ENCODE measurements at regions of chr7 and their contacts with region 1.

Region 1: DNA sequence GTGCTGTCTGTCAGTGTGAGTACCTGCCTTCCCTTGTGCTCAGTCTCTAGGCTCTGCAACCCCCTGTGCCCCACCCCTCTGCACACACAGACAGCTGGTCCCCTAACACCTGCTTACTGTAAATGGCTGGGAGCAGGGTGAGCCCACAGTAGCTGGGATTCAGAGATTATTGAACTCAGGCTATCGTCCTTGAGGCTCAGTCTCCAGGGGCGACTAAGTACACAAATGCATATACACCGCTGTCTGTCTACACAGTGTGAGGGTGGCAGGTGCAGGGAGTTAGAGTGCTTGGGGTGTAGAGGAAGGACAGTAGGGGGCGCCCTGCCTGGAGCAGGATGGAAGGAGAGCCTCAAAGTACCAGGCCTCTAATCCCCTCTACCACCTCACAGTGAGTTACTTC is 12.9 kb downstream of the UPP1 start:
- DNase-seq: peak; percentile 65
- ATAC-seq: peak; percentile 25
- H3K4me3 Mint-ChIP-seq: no peak overlapping the region
- H3K27ac Mint-ChIP-seq: no peak overlapping the region
- H3K4me1 Mint-ChIP-seq: peaks cover 29% of the 10 kb centered on the region
- H3K27me3 Mint-ChIP-seq: no peaks in the 10 kb centered on the region

Region 2: GRCh38 chr7:47968847-47969774 is 132.9 kb before region 1 on chr7:
- CTCF ChIA-PET with region 1: interaction called, 10 read pairs
- POLR2A ChIA-PET with region 1: no interaction called
- intact Hi-C with region 1: no loop called
- DNase-seq: peak; percentile 76
- ATAC-seq: peak; percentile 59
- H3K4me3 Mint-ChIP-seq: no peak overlapping the region
- H3K27ac Mint-ChIP-seq: no peak overlapping the region
- H3K4me1 Mint-ChIP-seq: peaks cover 32% of the 10 kb centered on the region
- H3K27me3 Mint-ChIP-seq: no peaks in the 10 kb centered on the region

Measured in activated CD4-positive, alpha-beta T cell treated with anti-CD3 and anti-CD28 coated beads for 36 hours (primary cell).